Gastrocnemius medialis (tissue), 4 donors: ENCODE measurements at regions of chr1 and their contacts with region 1.

Region 1: DNA sequence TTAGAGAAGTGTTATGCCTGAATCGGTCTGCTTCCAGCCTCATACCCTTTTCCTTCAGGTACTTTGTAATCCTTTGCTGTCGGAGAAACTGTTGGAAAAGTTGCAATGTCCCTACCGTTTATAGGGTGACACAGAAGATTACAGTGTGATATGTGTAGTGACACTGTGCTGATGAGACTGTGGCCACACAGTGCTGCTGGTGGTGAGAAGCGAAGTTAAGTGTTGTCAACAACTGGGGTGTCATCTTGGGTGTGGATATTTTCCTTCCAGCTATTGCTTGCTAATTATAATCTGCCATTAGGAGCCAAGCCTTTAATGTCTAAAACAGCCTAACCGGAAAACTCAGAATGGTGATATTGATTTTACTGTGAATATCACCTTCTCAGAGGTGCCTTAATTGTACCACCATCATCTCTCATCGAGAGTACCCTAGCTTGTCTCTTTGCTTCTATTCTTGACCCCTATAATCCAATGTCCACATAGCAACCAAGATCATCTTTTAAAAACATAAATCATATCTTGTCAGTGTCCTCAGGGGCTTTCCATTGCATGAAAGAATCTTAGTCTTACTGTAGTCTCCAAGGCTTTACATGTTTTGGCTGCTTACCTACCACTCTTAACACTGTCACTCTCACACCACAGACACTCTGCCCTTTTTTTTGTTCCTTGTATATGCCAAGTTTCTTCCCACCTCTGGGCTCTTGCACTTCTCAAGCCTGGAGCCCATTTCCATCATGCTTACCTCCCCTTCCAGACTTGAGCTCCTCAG is 89.4 kb upstream of the PGD start:
- DNase-seq: no peak
- ATAC-seq: peak in 1 of 2 donors; percentile 49
- H3K4me3 ChIP-seq: no peak overlapping the region
- H3K27ac ChIP-seq: peak overlapping the region; percentile 75 to 93 (median 89)
- H3K4me1 ChIP-seq: peaks cover 61 to 70% of the 10 kb centered on the region in 2 donors
- H3K27me3 ChIP-seq: no peaks in the 10 kb centered on the region
- CTCF ChIP-seq: no peak
- POLR2A ChIP-seq: no peak

Region 2: DNA sequence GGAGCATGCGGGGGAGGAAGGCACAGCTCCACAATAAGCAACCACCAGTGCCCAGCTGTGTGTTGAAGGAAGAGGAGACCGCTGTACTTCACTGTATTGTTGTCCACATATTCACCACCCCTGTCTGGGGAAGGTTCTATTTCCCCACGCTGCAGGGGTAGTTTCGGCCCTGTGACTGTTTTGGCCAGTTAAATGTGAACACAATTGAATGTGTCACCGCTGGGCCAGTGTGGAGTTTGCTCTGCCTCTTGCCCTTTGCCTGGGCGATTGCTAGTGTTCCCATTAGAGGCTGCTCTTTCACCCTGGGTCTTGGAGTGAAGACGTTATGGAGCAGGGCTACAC is 244.1 kb before region 1 on chr1:
- in situ Hi-C with region 1: no loop called
- intact Hi-C with region 1: loop called (anchors 5 kb)
- DNase-seq: peak in 1 of 2 donors; percentile 19
- ATAC-seq: peak in 1 of 2 donors; percentile 35
- H3K4me3 ChIP-seq: no peak overlapping the region
- H3K27ac ChIP-seq: peak overlapping the region; percentile 58 to 84 (median 82)
- H3K4me1 ChIP-seq: peaks cover 38 to 50% of the 10 kb centered on the region in 2 donors
- H3K27me3 ChIP-seq: no peaks in the 10 kb centered on the region
- CTCF ChIP-seq: no peak
- POLR2A ChIP-seq: no peak

Region 3: DNA sequence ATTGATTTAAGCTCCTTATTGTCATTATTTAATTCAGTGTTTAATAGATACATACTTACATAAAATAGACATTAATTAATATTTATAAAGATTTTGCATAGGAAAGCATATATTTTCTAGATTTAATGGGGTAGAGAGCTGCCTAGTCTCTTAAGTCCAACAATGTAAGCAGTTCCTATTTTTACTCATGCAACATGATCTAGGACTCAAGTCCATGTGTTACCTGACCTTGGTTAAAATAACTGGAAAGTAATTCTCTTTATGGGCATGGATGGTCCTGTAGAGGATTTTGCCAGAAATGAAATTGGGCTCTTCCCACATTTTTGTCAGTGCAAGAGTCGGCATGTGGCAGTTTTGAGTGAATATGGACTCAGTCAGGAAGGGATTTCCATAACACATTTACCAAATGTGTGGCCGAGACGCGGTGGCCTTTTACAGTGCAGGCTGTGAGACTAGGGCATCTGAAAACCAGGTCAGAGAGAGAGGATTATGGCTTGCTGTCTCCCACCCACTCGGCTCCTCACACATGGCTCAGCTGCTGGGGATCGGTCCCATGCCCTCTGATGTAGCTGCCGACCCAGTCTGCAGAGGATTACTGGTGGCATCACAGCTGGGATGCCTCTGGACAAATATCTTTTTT is 105.3 kb before region 1 on chr1:
- in situ Hi-C with region 1: no loop called
- intact Hi-C with region 1: no loop called
- DNase-seq: no peak
- ATAC-seq: peak; percentile 84 to 86
- H3K4me3 ChIP-seq: peak overlapping the region in 2 of 4 donors; percentile 9 to 16
- H3K27ac ChIP-seq: peak overlapping the region; percentile 73 to 84 (median 82)
- H3K4me1 ChIP-seq: peaks cover 12 to 15% of the 10 kb centered on the region in 2 donors
- H3K27me3 ChIP-seq: no peaks in the 10 kb centered on the region
- CTCF ChIP-seq: no peak
- POLR2A ChIP-seq: no peak

Region 4: DNA sequence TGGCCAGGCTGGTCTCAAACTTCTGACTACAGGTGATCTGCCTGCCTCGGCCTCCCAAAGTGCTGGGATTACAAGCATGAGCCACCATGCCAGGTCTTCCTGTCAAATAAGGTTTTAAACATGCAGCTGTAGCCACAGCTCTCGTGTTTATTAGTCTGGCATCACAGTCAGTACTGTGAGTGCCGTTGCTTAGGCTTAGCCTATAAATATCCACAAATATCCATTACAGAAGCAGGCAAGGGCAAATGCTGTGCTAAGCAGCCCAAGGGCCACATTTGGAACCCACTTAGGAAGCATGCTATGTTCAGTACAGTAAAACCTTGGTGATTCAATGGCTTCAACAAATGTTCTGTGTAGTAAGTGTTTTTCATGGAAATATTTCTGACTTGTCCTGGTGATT is 23.2 kb before region 1 on chr1:
- in situ Hi-C with region 1: no loop called
- intact Hi-C with region 1: no loop called
- DNase-seq: peak; percentile 82 to 89
- ATAC-seq: peak; percentile 83 to 87
- H3K4me3 ChIP-seq: no peak overlapping the region
- H3K27ac ChIP-seq: peak overlapping the region; percentile 83 to 92 (median 90)
- H3K4me1 ChIP-seq: peaks cover 40 to 61% of the 10 kb centered on the region in 2 donors
- H3K27me3 ChIP-seq: no peaks in the 10 kb centered on the region
- CTCF ChIP-seq: no peak
- POLR2A ChIP-seq: peak in 1 of 2 donors; percentile 25

Region 5: DNA sequence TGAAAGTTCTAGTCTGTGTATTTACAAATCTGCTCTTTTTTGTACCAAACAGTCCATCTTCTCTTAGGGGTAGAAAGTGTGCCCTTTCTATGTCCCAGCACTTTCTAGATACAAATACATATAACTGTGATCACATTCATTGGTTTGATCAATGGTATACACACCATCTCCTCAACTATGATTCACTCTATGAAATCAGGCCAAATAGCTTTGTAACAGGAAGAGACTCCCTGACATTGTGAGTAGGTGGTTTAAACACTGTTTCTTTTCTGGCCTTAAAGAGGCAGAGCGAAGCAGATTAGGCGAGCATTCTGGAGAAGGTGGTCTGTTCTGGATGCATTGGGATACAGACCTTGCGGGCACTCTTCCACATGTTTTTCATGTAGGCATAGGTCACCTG is 829.5 kb after region 1 on chr1:
- in situ Hi-C with region 1: no loop called
- intact Hi-C with region 1: no loop called
- DNase-seq: no peak
- ATAC-seq: no peak
- H3K4me3 ChIP-seq: no peak overlapping the region
- H3K27ac ChIP-seq: no peak overlapping the region
- H3K4me1 ChIP-seq: peaks cover 8 to 9% of the 10 kb centered on the region in 2 donors
- H3K27me3 ChIP-seq: no peaks in the 10 kb centered on the region
- CTCF ChIP-seq: no peak
- POLR2A ChIP-seq: no peak